Transverse colon (tissue), 4 donors: ENCODE measurements at regions of chr1 and their contacts with region 1.

Region 1: GRCh38 chr1:153572569-153573015 is 6.9 kb upstream of the S100A2 start:
- DNase-seq: peak; percentile 90
- H3K4me3 ChIP-seq: no peak overlapping the region
- H3K27ac ChIP-seq: peak overlapping the region; percentile 29 to 63 (median 59)
- H3K4me1 ChIP-seq: peaks cover 17 to 38% (median 20%) of the 10 kb centered on the region in 4 donors
- H3K27me3 ChIP-seq: no peaks in the 10 kb centered on the region
- CTCF ChIP-seq: peak; percentile 76 to 90 (median 81)
- EP300 ChIP-seq: no peak
- POLR2A ChIP-seq: no peak

Region 2: DNA sequence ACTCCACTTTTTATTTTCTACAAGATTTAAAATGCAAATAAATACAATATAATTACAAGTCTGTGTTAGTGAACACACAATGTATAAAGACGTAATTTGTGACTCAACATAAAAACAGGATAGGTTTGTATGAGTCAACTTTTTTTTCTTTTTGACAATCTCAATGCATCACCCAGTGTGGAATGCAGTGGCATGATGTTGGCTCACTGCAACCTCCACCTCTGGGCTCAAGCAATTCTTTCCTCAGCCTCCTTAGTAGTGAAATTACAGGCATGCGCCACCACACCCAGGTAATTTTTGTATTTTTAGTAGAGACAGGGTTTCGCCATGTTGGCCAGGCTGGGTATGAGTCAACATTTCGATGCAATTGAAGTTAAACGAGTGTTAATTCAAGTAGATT is 472.4 kb before region 1 on chr1:
- in situ Hi-C with region 1: no loop called
- intact Hi-C with region 1: no loop called
- DNase-seq: no peak
- H3K4me3 ChIP-seq: no peak overlapping the region
- H3K27ac ChIP-seq: no peak overlapping the region
- H3K4me1 ChIP-seq: no peaks in the 10 kb centered on the region
- H3K27me3 ChIP-seq: no peaks in the 10 kb centered on the region
- CTCF ChIP-seq: no peak
- EP300 ChIP-seq: no peak
- POLR2A ChIP-seq: no peak

Region 3: GRCh38 chr1:153532769-153533599 is 39.6 kb before region 1 on chr1:
- in situ Hi-C with region 1: no loop called
- intact Hi-C with region 1: loop called (anchors 1 kb)
- DNase-seq: peak; percentile 92
- H3K4me3 ChIP-seq: peak overlapping the region; percentile 1 to 81 (median 74)
- H3K27ac ChIP-seq: peak overlapping the region; percentile 95 to 100 (median 99)
- H3K4me1 ChIP-seq: peaks cover 17 to 58% (median 52%) of the 10 kb centered on the region in 4 donors
- H3K27me3 ChIP-seq: no peaks in the 10 kb centered on the region
- CTCF ChIP-seq: peak; percentile 86 to 97 (median 92)
- EP300 ChIP-seq: no peak
- POLR2A ChIP-seq: peak; percentile 80

Region 4: DNA sequence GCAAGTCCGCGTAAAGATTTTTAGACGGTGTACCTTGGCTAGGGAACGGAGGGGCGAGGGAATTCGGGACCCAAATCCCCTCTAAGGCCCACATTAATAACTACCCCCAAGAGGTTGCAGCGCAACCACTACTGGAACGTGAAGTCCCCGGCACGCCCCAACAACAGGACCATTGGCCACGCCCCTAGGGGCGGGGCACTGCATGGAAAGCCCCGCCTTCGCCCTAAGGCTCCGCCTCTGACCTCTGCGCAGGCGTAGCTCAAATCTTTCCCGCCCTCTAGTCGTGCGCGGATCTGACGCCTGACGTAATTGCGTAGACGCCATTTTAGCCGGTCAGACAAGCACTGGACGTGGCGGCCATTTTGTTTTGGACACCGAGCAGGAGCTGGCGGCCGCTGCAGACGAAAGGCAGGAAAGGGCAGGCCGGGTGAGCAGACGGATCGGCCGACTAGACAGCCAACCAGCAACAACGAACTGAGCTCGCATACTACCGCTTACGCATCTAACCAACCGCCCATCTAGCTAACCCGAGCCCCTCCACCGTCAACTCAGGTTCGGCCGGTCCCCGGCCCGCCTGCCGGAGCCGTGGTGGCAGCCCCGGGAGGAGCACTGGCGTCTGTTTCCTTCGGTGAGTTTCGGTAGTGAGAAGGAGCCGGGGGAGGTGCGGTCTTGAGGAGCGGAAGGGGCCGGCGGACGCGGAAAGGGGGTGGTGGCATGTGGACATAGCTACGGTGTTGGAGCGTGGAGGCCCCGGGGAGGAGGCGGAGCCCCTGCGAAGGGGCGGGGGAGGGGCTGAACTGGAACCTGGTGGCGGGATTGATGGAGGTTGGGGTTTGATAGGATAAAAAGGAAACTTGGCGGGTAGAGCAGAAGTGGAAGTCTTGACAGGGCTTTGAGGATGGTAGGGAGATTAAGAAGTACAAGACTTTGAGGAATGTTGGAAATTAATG is 61.4 kb after region 1 on chr1 and contains the start of gene CHTOP:
- in situ Hi-C with region 1: no loop called
- intact Hi-C with region 1: no loop called
- DNase-seq: peak; percentile 99
- H3K4me3 ChIP-seq: peak within 1 kb of the TSS; percentile 53 to 88 (median 65)
- H3K27ac ChIP-seq: peak within 1 kb of the TSS; percentile 95 to 98 (median 96)
- H3K4me1 ChIP-seq: peaks cover 20 to 69% (median 47%) of the 10 kb centered on the region in 4 donors
- H3K27me3 ChIP-seq: no peaks in the 10 kb centered on the region
- CTCF ChIP-seq: peak in 2 of 5 experiments; percentile 43 to 48
- EP300 ChIP-seq: no peak
- POLR2A ChIP-seq: peak; percentile 91
- total RNA-seq, gene CHTOP: 35.2 to 86.1 (median 65.2) TPM

Region 5: GRCh38 chr1:153663211-153663610 is 90.6 kb after region 1 on chr1:
- in situ Hi-C with region 1: loop called in 1 of 4 experiments (anchors 10 kb)
- intact Hi-C with region 1: no loop called
- DNase-seq: no peak
- H3K4me3 ChIP-seq: no peak overlapping the region
- H3K27ac ChIP-seq: no peak overlapping the region
- H3K4me1 ChIP-seq: peaks cover 0 to 14% (median 12%) of the 10 kb centered on the region in 4 donors
- H3K27me3 ChIP-seq: no peaks in the 10 kb centered on the region
- CTCF ChIP-seq: no peak
- EP300 ChIP-seq: no peak
- POLR2A ChIP-seq: no peak